Head of caudate nucleus (tissue), 42 donors: ENCODE measurements at regions of chr10 and their contacts with region 1.

Region 1: DNA sequence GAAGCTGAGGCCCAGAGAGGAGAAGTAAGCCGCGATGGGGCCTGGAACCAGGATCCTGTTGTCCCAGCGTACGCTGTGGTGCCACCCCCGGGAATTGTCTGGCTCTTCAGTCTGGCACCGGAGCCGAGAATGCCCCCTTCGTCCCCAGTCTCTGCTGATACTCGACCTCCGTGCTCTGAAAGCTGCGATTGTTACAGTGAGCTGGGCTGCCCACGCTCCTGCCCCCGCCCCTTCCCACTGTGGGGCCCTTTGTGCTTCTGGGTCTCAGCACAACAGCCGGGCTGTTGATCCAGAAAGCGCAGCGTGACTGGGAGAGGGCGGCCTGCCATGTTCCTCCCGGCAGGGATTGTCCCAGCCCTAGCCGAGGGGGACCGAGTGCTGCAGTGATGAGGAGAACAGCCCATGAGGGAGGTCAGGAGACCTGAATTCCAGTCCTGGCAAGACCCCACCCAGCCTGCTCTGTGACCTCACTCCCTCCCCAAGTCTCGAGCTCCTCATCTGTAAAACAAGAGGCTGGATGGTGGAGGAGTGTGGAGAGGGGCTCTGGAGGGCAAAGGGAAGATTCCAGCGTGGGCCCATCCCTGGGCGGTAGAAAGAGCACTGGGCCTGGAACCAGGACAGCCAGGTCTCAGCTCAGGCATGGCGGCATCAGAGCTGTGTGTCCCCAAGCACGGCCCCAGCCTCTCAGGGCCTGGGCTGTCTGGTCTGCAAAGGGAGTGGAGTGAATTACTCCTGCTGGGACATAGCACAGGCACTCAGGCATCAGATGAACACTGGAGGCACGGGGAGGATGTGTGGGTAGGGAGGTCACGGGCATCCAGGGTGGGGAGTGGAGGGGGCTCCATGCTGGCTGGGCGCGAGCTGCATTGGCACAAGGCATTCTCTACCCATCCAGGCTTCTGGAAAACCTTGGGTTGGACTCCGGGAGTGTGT is 43.6 kb downstream of the TSPAN15 start:
- DNase-seq: peak; percentile 87 to 98 (median 96)

Region 2: GRCh38 chr10:68537796-68538195 is 957.1 kb before region 1 on chr10:
- intact Hi-C with region 1: no loop called
- DNase-seq: no peak

Region 3: GRCh38 chr10:68705548-68705947 is 789.3 kb before region 1 on chr10:
- intact Hi-C with region 1: no loop called
- DNase-seq: no peak

Region 4: DNA sequence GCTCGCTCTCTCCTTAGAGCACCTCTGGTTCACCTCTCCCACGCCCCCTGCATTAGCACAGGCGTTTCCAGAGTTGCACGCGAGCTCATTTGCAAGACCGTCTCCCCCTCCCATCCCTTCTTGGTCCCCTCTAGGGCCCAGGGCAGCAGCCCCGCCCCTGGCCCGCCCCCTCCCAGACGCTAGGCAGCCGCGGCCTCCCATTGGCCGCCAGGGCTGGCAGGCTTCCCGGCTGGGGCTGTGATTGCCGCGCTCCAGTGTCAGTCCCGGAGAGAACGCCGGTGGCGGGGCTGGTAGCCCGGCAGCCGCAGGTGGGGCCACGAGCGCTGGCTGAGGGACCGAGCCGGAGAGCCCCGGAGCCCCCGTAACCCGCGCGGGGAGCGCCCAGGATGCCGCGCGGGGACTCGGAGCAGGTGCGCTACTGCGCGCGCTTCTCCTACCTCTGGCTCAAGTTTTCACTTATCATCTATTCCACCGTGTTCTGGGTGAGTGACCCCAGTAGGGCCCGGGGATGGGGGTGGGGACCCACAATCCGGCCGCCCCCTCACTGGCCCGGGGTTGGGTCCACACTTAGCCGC is 43.6 kb before region 1 on chr10 and contains the start of gene TSPAN15:
- intact Hi-C with region 1: loop called (anchors 2 kb)
- DNase-seq: peak; percentile 91 to 98 (median 97)